ENCODE measurements at regions of chr7 and their contacts with region 1.

Region 1: DNA sequence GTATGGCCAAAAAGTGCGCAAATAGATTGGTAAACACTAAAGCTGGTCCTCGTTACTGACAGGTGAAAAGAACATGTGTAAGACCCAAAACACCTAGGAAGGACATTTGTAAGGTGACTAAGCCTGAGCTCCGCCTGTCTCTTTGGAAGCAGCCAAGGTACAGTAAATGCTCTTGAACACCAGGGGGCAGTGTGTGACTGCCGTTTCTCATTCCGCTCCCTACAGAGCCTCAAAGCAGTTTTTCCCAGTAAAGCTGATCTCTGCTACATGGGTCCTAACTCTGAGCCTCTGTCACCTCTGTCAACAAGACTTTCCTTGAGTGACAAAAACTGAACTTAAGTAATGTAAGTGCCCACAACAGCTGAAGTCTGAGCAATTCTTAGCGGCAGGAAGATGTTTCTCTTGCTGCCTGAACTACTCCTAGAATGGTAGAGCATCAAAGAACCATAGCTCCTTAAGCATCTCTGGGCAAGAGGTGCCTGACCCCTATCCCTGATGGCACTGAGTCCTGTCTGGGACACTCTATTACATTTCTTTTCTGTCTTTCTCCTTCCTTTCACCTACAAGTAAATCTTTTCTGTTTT is 238.0 kb upstream of the INHBA start:
- DNase-seq: no peak
- ATAC-seq: peak; percentile 82

Region 2: GRCh38 chr7:42283553-42283952 is 342.7 kb after region 1 on chr7:
- intact Hi-C with region 1: no loop called
- DNase-seq: no peak
- ATAC-seq: no peak

Region 3: GRCh38 chr7:42831718-42832431 is 891.0 kb after region 1 on chr7:
- intact Hi-C with region 1: loop called (anchors 5 kb)
- DNase-seq: peak; percentile 50
- ATAC-seq: peak; percentile 74

Region 4: GRCh38 chr7:42876182-42877068 is 935.6 kb after region 1 on chr7:
- intact Hi-C with region 1: loop called (anchors 5 kb)
- DNase-seq: peak; percentile 58
- ATAC-seq: peak; percentile 56